B cell (primary cell): ENCODE measurements at regions of chr5 and their contacts with region 1.

Region 1: DNA sequence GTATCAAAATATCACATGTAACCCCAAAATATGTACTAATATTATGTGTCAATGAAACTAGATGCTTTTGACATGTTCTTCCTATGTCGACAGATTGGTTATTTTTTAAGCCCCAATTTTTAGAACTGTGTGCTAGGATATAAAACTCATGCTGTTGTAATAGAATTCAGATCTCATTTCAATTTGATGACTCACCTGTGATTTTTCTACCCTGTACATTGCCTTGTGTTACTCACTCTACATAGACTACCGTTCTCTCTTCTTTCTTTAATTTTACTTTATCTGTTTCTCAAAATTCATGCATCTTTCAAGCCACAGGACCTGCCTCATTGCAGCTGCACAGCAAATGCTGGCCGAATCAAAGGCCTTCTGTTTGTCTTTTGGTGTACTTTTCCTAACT is 284.5 kb downstream of the MAT2B start:
- DNase-seq: no peak
- ATAC-seq: no peak
- H3K4me3 ChIP-seq: no peak overlapping the region
- H3K4me3 Mint-ChIP-seq: no peak overlapping the region
- H3K27ac ChIP-seq: no peak overlapping the region
- H3K27ac Mint-ChIP-seq: no peak overlapping the region
- H3K4me1 ChIP-seq: no peaks in the 10 kb centered on the region
- H3K4me1 Mint-ChIP-seq: peaks cover 9% of the 10 kb centered on the region
- H3K27me3 ChIP-seq: no peaks in the 10 kb centered on the region
- H3K27me3 Mint-ChIP-seq: no peaks in the 10 kb centered on the region
- CTCF ChIP-seq: no peak

Region 2: DNA sequence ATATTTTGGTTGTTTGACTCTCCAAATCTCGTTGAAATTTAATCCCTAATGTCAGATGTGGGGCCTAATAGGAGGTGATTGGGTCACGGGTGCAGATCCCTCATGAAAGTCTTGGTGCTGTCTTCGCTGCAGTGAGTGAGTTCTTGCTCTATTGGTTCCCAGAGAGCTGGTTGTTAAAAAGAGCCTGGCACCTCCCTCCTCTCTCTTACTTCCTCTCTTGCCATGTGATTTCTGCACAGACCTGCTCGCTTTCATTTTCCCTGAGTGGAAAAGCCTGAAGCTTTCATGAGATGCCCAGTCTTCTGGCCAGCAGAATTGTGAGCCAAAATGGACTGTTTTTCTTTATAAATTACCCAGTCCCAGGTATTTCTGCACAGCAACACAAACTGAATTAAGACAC is 62.8 kb before region 1 on chr5:
- CTCF ChIA-PET with region 1: no interaction called
- POLR2A ChIA-PET with region 1: no interaction called
- intact Hi-C with region 1: loop called (anchors 2 kb)
- DNase-seq: peak; percentile 68
- ATAC-seq: peak; percentile 97
- H3K4me3 ChIP-seq: peak overlapping the region in 4 of 5 experiments; percentile 12 to 58 (median 40)
- H3K4me3 Mint-ChIP-seq: peak overlapping the region; percentile 49
- H3K27ac ChIP-seq: peak overlapping the region; percentile 37 to 48
- H3K27ac Mint-ChIP-seq: peak overlapping the region; percentile 80
- H3K4me1 ChIP-seq: peaks cover 8 to 16% of the 10 kb centered on the region in 2 donors
- H3K4me1 Mint-ChIP-seq: peaks cover 34% of the 10 kb centered on the region
- H3K27me3 ChIP-seq: no peaks in the 10 kb centered on the region
- H3K27me3 Mint-ChIP-seq: no peaks in the 10 kb centered on the region
- CTCF ChIP-seq: no peak

Region 3: GRCh38 chr5:163770625-163771024 is 19.2 kb before region 1 on chr5:
- CTCF ChIA-PET with region 1: no interaction called
- POLR2A ChIA-PET with region 1: no interaction called
- intact Hi-C with region 1: no loop called
- DNase-seq: no peak
- ATAC-seq: no peak
- H3K4me3 ChIP-seq: no peak overlapping the region
- H3K4me3 Mint-ChIP-seq: no peak overlapping the region
- H3K27ac ChIP-seq: no peak overlapping the region
- H3K27ac Mint-ChIP-seq: no peak overlapping the region
- H3K4me1 ChIP-seq: no peaks in the 10 kb centered on the region
- H3K4me1 Mint-ChIP-seq: no peaks in the 10 kb centered on the region
- H3K27me3 ChIP-seq: no peaks in the 10 kb centered on the region
- H3K27me3 Mint-ChIP-seq: peaks cover 4% of the 10 kb centered on the region
- CTCF ChIP-seq: no peak

Region 4: GRCh38 chr5:165039748-165040147 is 1249.9 kb after region 1 on chr5:
- CTCF ChIA-PET with region 1: no interaction called
- POLR2A ChIA-PET with region 1: no interaction called
- intact Hi-C with region 1: no loop called
- DNase-seq: no peak
- ATAC-seq: no peak
- H3K4me3 ChIP-seq: no peak overlapping the region
- H3K4me3 Mint-ChIP-seq: no peak overlapping the region
- H3K27ac ChIP-seq: no peak overlapping the region
- H3K27ac Mint-ChIP-seq: no peak overlapping the region
- H3K4me1 ChIP-seq: no peaks in the 10 kb centered on the region
- H3K4me1 Mint-ChIP-seq: no peaks in the 10 kb centered on the region
- H3K27me3 ChIP-seq: no peaks in the 10 kb centered on the region
- H3K27me3 Mint-ChIP-seq: no peaks in the 10 kb centered on the region
- CTCF ChIP-seq: no peak